ENCODE measurements at regions of chr2 and their contacts with region 1.

Region 1: DNA sequence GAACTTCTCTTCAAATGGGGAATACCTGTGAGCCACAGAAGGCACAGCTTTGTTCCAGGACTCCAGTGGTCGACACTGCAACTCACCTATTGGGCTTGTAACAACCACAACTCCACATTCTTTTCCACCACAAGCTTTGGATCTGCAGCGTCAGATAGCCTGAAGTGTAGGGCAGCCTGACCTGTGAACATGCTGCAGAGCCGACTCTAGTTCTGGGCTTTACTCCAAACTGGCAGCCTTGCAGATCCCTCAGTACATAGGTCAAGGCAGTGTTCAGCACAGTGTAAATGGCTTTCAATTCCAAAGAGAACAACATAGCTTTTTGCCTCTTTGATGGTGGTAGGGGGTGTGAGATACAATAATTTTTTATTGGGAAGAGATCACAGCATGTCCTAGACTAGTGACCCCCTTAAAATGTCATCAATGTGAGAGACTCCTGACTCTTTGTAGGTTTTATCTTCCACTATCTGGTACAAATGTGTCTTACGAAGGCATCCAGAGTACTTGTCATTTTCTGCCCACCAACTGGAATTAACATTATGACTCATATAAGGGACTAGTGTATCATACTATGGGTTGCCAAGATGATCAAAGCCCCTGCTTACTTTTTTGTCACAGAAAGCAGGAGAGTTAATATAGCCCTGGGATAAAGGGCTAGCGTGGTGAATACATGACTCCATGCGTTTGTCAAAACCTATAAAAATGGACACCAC is 149.8 kb downstream of the COPS8 start:
- DNase-seq: peak; percentile 66 to 86 (median 76)
- ATAC-seq: peak; percentile 89 to 94
- H3K4me3 ChIP-seq: no peak overlapping the region
- H3K27ac ChIP-seq: peak overlapping the region; percentile 73
- H3K4me1 ChIP-seq: peaks cover 15% of the 10 kb centered on the region
- H3K27me3 ChIP-seq: no peaks in the 10 kb centered on the region

Region 2: DNA sequence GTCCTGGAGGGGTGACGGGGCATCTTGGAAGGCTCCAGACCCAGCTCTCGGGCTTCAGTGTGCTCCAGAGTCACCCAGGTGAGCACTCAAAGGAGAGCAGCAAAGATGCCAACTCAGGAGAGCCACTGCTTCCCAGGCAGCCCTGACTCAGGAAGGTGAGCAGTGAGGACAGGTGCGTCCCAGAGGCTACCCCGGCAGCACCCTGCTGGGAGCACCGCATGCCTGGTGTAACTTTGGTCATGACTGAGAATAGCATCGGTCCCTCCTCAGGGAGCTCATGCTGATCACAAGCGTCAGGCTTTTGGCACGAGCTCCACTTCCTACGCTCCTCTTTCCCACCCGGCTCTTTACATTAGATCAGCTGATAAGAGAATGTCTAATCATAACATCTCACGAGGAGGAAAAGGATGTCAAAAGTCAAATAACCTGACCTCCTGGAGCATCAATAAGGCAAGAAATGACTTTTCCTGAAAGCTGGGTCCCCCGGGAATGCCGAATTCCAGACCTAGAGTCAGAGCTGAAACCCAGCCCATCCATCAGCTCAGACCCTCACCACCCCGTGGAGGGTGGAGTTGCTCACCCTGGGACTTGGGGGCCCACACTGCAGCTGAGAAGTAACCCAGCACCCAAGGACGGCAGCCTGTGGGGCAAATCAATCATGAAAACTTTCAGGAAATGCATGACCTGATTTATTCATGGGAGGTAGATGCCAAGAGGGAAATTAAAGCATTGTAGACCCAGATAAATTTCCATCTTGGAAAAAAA is 417.1 kb before region 1 on chr2:
- intact Hi-C with region 1: no loop called
- DNase-seq: no peak
- ATAC-seq: no peak
- H3K4me3 ChIP-seq: no peak overlapping the region
- H3K27ac ChIP-seq: no peak overlapping the region
- H3K4me1 ChIP-seq: no peaks in the 10 kb centered on the region
- H3K27me3 ChIP-seq: no peaks in the 10 kb centered on the region

Region 3: DNA sequence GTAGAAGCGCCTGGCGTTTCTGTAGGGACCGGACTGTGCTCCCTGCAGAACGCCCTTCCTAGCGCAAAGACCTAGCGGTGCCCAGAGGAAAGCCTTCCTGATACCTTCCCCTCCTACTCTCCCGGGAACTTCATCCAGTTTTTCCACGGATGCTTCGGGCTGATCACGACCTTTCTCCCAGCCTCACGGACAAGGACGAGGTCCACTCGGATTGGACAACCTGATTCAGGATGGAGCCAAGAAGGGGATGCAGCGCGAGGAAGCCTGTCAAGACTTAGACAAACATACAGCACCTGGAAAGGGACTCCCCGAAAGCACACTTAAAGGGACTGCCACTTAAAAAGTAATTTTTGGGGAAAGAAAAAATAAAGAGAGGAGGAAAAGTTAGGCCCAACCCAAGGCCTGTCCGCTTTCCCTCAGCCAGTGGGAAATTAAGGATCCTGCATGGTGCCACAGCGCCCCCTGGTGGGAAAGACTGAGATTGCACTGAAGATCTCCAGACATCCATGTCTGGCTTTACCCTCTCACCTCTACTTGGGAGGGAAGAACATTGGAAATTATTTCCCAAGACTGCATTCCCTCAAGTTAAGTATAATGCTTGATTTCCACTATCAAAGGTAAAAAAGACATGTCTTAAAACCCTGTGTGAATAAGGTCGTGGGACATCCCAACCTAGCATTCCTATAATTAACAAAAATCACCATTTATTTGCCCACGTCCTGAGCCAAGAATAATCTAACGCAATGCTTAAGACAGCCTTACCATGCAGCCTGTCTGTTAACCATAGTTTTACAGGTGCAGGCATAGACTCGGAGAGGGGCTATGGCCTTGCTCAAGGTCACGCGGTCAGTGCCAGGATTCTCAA is 163.2 kb before region 1 on chr2:
- intact Hi-C with region 1: no loop called
- DNase-seq: peak; percentile 67 to 87 (median 79)
- ATAC-seq: peak; percentile 51 to 70
- H3K4me3 ChIP-seq: no peak overlapping the region
- H3K27ac ChIP-seq: no peak overlapping the region
- H3K4me1 ChIP-seq: no peaks in the 10 kb centered on the region
- H3K27me3 ChIP-seq: no peaks in the 10 kb centered on the region

Region 4: GRCh38 chr2:237291138-237291792 is 55.7 kb after region 1 on chr2:
- intact Hi-C with region 1: loop called in 2 of 4 experiments (anchors 10 kb)
- DNase-seq: peak; percentile 96 to 98 (median 97)
- ATAC-seq: peak; percentile 96
- H3K4me3 ChIP-seq: peak overlapping the region; percentile 22
- H3K27ac ChIP-seq: peak overlapping the region; percentile 98
- H3K4me1 ChIP-seq: no peaks in the 10 kb centered on the region
- H3K27me3 ChIP-seq: no peaks in the 10 kb centered on the region

Region 5: GRCh38 chr2:237315170-237315828 is 79.8 kb after region 1 on chr2:
- intact Hi-C with region 1: no loop called
- DNase-seq: peak; percentile 91 to 97 (median 95)
- ATAC-seq: peak; percentile 94 to 95
- H3K4me3 ChIP-seq: no peak overlapping the region
- H3K27ac ChIP-seq: peak overlapping the region; percentile 93
- H3K4me1 ChIP-seq: peaks cover 8% of the 10 kb centered on the region
- H3K27me3 ChIP-seq: no peaks in the 10 kb centered on the region